CD4-positive, alpha-beta T cell (primary cell): ENCODE measurements at regions of chr16 and their contacts with region 1.

Region 1: DNA sequence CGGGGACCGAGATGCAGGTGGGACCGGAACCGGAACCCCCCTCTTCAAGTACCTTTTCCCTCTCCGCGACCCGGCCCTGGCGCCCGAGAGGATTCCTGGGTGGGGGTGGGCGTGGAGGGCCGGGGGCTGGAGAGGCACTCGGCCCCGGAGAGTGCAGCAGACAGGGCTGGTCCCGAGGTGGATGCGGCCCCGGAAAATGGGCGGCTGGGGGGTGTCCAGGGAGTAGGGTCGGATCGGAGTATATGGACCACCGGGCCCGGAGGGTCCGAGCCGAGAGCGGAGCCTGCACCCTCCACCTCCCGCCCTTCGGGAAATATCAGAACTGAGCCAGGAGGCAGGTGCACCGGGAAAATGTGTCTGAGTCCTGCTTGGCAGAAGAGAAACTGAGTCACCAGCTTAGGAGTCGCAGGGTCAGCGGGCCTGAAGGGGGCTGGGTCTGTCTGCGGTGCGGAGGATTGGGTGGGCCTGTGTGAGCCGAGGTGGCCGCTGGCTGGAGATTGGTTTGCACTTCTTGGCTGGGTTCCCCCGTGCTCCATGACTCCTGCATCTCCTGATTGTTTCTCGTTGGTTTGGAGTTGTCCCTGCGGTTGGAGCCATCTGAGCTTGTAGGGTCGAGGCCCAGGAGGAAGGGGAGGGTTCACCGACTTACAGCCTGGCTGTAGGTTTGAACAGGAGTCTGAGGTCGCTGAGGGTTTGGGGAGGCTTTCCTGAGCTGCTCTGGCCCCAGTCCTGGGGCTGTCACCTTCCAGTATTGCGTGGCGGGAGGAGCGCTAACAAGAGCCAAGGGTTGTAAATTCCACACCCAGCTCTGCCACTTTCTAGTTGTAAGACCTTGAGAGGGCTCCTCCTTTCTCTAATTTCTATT is 518 bp downstream of the SH2B1 start:
- DNase-seq: peak in 5 of 14 experiments; percentile 12 to 69 (median 30)
- ATAC-seq: peak; percentile 2
- H3K4me3 ChIP-seq: peak overlapping the region; percentile 97
- H3K4me3 Mint-ChIP-seq: peak overlapping the region; percentile 95
- H3K27ac ChIP-seq: peak overlapping the region; percentile 90 to 96
- H3K27ac Mint-ChIP-seq: peak overlapping the region; percentile 95
- H3K4me1 ChIP-seq: peaks cover 19% of the 10 kb centered on the region
- H3K4me1 Mint-ChIP-seq: peaks cover 30% of the 10 kb centered on the region
- H3K27me3 ChIP-seq: no peaks in the 10 kb centered on the region
- H3K27me3 Mint-ChIP-seq: no peaks in the 10 kb centered on the region
- CTCF ChIP-seq: no peak

Region 2: GRCh38 chr16:28879841-28880588 is 15.9 kb after region 1 on chr16:
- CTCF ChIA-PET with region 1: no interaction called
- POLR2A ChIA-PET with region 1: interaction called, 29 read pairs
- intact Hi-C with region 1: loop called in 1 of 2 experiments (anchors 2 kb)
- DNase-seq: peak; percentile 80 to 92 (median 87)
- ATAC-seq: peak; percentile 98
- H3K4me3 ChIP-seq: peak overlapping the region; percentile 95
- H3K4me3 Mint-ChIP-seq: peak overlapping the region; percentile 87
- H3K27ac ChIP-seq: no peak overlapping the region
- H3K27ac Mint-ChIP-seq: no peak overlapping the region
- H3K4me1 ChIP-seq: peaks cover 20% of the 10 kb centered on the region
- H3K4me1 Mint-ChIP-seq: peaks cover 8% of the 10 kb centered on the region
- H3K27me3 ChIP-seq: peaks cover 0 to 9% of the 10 kb centered on the region in 2 experiments
- H3K27me3 Mint-ChIP-seq: peaks cover 6% of the 10 kb centered on the region
- CTCF ChIP-seq: no peak

Region 3: GRCh38 chr16:28902909-28903308 is 38.7 kb after region 1 on chr16:
- CTCF ChIA-PET with region 1: no interaction called
- POLR2A ChIA-PET with region 1: no interaction called
- intact Hi-C with region 1: no loop called
- DNase-seq: no peak
- ATAC-seq: no peak
- H3K4me3 ChIP-seq: no peak overlapping the region
- H3K4me3 Mint-ChIP-seq: no peak overlapping the region
- H3K27ac ChIP-seq: no peak overlapping the region
- H3K27ac Mint-ChIP-seq: no peak overlapping the region
- H3K4me1 ChIP-seq: no peaks in the 10 kb centered on the region
- H3K4me1 Mint-ChIP-seq: no peaks in the 10 kb centered on the region
- H3K27me3 ChIP-seq: no peaks in the 10 kb centered on the region
- H3K27me3 Mint-ChIP-seq: no peaks in the 10 kb centered on the region
- CTCF ChIP-seq: no peak

Region 4: GRCh38 chr16:28943281-28943680 is 79.1 kb after region 1 on chr16:
- CTCF ChIA-PET with region 1: interaction called, 15 read pairs
- POLR2A ChIA-PET with region 1: no interaction called
- intact Hi-C with region 1: no loop called
- DNase-seq: no peak
- ATAC-seq: no peak
- H3K4me3 ChIP-seq: no peak overlapping the region
- H3K4me3 Mint-ChIP-seq: no peak overlapping the region
- H3K27ac ChIP-seq: no peak overlapping the region
- H3K27ac Mint-ChIP-seq: no peak overlapping the region
- H3K4me1 ChIP-seq: peaks cover 8% of the 10 kb centered on the region
- H3K4me1 Mint-ChIP-seq: peaks cover 11% of the 10 kb centered on the region
- H3K27me3 ChIP-seq: no peaks in the 10 kb centered on the region
- H3K27me3 Mint-ChIP-seq: no peaks in the 10 kb centered on the region
- CTCF ChIP-seq: no peak

Region 5: DNA sequence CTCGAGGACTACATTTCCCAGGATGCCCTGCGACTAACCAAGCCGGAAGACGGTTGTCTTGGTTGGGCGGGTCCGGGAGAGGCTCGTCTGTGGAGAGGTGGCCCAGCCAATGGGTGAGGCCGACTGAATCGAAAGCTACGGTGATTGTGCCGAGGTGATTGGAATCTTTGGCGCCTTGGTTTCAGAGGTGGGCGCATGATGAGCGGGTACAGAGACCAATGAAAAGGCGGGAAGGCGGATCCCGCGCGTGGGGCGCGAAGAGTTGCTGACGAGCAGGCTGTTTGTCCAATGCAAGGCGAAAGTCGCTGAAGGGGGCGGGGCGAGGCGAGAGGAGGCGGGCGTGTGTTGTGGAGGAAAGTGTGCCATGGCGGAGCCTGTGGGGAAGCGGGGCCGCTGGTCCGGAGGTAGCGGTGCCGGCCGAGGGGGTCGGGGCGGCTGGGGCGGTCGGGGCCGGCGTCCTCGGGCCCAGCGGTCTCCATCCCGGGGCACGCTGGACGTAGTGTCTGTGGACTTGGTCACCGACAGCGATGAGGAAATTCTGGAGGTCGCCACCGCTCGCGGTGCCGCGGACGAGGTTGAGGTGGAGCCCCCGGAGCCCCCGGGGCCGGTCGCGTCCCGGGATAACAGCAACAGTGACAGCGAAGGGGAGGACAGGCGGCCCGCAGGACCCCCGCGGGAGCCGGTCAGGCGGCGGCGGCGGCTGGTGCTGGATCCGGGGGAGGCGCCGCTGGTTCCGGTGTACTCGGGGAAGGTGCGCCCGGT is 86.7 kb after region 1 on chr16 and contains the start of gene NFATC2IP:
- CTCF ChIA-PET with region 1: interaction called, 15 read pairs
- POLR2A ChIA-PET with region 1: interaction called, 18 read pairs
- intact Hi-C with region 1: no loop called
- DNase-seq: peak; percentile 98 to 100 (median 99)
- ATAC-seq: peak; percentile 95
- H3K4me3 ChIP-seq: peak within 1 kb of the TSS; percentile 77
- H3K4me3 Mint-ChIP-seq: peak within 1 kb of the TSS; percentile 96
- H3K27ac ChIP-seq: peak within 1 kb of the TSS; percentile 36 to 63
- H3K27ac Mint-ChIP-seq: peak within 1 kb of the TSS; percentile 74
- H3K4me1 ChIP-seq: peaks cover 31% of the 10 kb centered on the region
- H3K4me1 Mint-ChIP-seq: peaks cover 28% of the 10 kb centered on the region
- H3K27me3 ChIP-seq: no peaks in the 10 kb centered on the region
- H3K27me3 Mint-ChIP-seq: no peaks in the 10 kb centered on the region
- CTCF ChIP-seq: no peak
- total RNA-seq, gene NFATC2IP: 47.4 to 51.0 TPM